ENCODE measurements at regions of chr1 and their contacts with region 1.

Region 1: GRCh38 chr1:235105051-235106043 is 23.3 kb downstream of the TOMM20 start:
- DNase-seq: peak; percentile 32
- ATAC-seq: no peak; the same call in 1 of the 2 replicates
- H3K4me3 ChIP-seq: no peak overlapping the region
- H3K27ac ChIP-seq: no peak overlapping the region
- H3K4me1 ChIP-seq: peaks cover 4% of the 10 kb centered on the region
- H3K27me3 ChIP-seq: no peaks in the 10 kb centered on the region
- CTCF ChIP-seq: no peak
- POLR2A ChIP-seq: no peak
- RAD21 ChIP-seq: no peak

Region 2: GRCh38 chr1:234125283-234125682 is 980.1 kb before region 1 on chr1:
- CTCF ChIA-PET with region 1: no interaction called
- POLR2A ChIA-PET with region 1: no interaction called
- dilution Hi-C with region 1: no loop called
- in situ Hi-C with region 1: loop called (anchors 25 kb)
- intact Hi-C with region 1: no loop called
- DNase-seq: peak; percentile 44
- ATAC-seq: peak; percentile 73
- H3K4me3 ChIP-seq: no peak overlapping the region
- H3K27ac ChIP-seq: no peak overlapping the region
- H3K4me1 ChIP-seq: no peaks in the 10 kb centered on the region
- H3K27me3 ChIP-seq: no peaks in the 10 kb centered on the region
- CTCF ChIP-seq: peak; percentile 48
- POLR2A ChIP-seq: no peak
- RAD21 ChIP-seq: peak; percentile 62

Region 3: DNA sequence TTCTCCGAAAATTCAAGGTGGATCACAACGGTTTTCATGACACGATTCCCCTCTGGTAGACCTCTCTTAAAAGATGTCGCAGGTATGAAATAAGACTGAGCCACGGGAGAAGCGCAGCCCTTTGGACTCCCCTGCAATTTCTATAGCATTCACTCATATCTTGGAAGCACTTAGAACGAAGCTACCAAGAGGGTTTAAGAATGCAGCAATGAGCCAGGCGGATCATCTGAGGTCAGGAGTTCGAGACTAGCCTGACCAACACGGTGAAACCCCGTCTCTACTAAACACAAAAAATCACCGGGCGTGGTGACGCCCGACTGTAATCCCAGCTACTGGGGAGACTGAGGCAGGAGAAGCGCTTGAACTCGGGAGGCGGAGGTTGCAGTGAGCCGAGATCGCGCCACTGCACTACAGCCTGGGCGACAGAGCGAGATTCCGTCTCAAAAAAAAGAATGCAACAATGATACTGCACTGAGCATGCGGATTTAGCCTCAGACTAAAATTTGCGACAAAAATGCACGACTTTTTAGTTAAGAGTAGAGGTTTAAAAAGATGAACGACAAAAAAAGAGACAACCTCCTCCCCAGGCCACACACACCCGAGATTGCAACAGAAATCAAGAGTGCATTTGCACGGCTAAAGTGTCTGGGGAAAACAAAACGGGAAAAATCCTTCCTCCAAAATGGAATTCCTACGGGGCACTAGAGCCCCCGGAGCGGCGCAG is 22.5 kb after region 1 on chr1:
- CTCF ChIA-PET with region 1: no interaction called
- POLR2A ChIA-PET with region 1: no interaction called
- dilution Hi-C with region 1: no loop called
- in situ Hi-C with region 1: no loop called
- intact Hi-C with region 1: no loop called
- DNase-seq: no peak
- ATAC-seq: no peak
- H3K4me3 ChIP-seq: peak overlapping the region; percentile 73
- H3K27ac ChIP-seq: peak overlapping the region; percentile 87
- H3K4me1 ChIP-seq: 0 out of 2 replicates have a peak, but pooled peaks cover 1% of the 10 kb centered on the region
- H3K27me3 ChIP-seq: no peaks in the 10 kb centered on the region
- CTCF ChIP-seq: no peak
- POLR2A ChIP-seq: no peak
- RAD21 ChIP-seq: no peak